Activated CD8-positive, alpha-beta T cell treated with anti-CD3 and anti-CD28 coated beads, Interleukin-2, amount 10 ng/mL, durations not matched to agents 7 days and 5 days (primary cell): ENCODE measurements at regions of chr11 and their contacts with region 1.

Region 1: GRCh38 chr11:74321487-74322188 is 10.2 kb upstream of the P4HA3 start:
- DNase-seq: peak; percentile 25
- ATAC-seq: no peak
- H3K4me3 Mint-ChIP-seq: no peak overlapping the region
- H3K27ac Mint-ChIP-seq: no peak overlapping the region
- H3K4me1 Mint-ChIP-seq: no peaks in the 10 kb centered on the region
- H3K27me3 Mint-ChIP-seq: peaks cover 22% of the 10 kb centered on the region

Region 2: DNA sequence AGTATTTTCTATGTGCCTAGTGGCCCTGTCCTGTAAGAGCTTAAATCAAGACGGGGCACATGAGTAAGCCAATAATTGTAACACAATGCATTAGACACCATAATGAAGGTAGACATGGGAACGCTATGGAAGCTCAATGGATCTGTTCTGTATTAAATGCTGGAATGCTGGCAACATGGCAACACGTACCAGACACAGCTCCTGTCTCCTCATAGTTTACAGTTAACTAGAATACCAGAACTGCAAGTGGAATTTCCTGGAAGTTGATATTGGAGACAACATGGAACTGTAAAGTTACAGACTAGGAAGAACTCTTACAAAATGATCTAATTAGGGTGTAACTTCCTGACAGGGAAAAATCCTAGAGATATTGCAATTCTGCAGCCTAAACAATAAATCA is 22.6 kb before region 1 on chr11:
- CTCF ChIA-PET with region 1: interaction called, 13 read pairs
- POLR2A ChIA-PET with region 1: no interaction called
- DNase-seq: no peak
- ATAC-seq: no peak
- H3K4me3 Mint-ChIP-seq: no peak overlapping the region
- H3K27ac Mint-ChIP-seq: no peak overlapping the region
- H3K4me1 Mint-ChIP-seq: peaks cover 5% of the 10 kb centered on the region
- H3K27me3 Mint-ChIP-seq: peaks cover 7% of the 10 kb centered on the region

Region 3: GRCh38 chr11:74311352-74311926 is 10.2 kb before region 1 on chr11 and contains the start of gene P4HA3:
- CTCF ChIA-PET with region 1: interaction called, 12 read pairs
- POLR2A ChIA-PET with region 1: interaction called, 4 read pairs
- DNase-seq: peak; percentile 64
- ATAC-seq: peak; percentile 97
- H3K4me3 Mint-ChIP-seq: peak within 1 kb of the TSS; percentile 48
- H3K27ac Mint-ChIP-seq: no peak within 1 kb of the TSS
- H3K4me1 Mint-ChIP-seq: peaks cover 6% of the 10 kb centered on the region
- H3K27me3 Mint-ChIP-seq: peaks cover 52% of the 10 kb centered on the region
- total RNA-seq, gene P4HA3: not detected